ENCODE measurements at regions of chr17 and their contacts with region 1.

Region 1: DNA sequence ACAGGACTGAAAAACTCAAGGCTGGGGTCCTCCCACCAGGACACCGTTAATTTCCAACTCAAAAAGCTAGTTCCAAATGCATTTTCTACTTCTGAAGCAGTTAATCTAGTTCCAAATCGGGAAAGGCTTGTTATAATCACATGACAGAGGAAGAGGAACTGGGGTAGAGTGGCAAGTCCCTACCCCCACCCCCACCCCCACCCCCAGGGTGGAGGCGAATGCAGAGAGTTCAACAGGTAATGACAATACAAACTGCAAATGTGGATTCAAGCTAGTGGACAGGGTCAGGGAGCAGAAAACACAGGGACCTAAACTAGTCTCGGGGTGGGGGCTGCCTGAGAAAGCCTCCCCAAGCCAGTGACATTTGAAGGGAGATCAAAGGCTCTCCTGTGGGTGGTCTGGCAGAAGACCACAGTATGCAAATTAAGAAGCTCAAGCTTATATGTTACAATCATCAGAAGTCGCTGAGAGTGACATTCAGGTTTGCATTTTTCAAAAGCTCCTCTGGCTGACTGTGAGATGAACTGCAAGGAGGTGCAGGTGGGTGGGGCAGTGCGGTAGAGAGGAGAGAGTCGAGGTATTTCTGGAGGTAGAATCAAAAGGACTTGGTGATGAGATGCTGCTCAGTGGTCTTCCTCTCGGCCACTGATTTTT is 56.4 kb upstream of the SLC25A19 start:
- DNase-seq: peak in 12 of 14 experiments; percentile 12 to 71 (median 44)
- ATAC-seq: peak; percentile 79
- H3K4me3 ChIP-seq: peak overlapping the region; percentile 15
- H3K4me3 Mint-ChIP-seq: peak overlapping the region; percentile 76
- H3K27ac ChIP-seq: peak overlapping the region in 1 of 2 donors; percentile 12
- H3K27ac Mint-ChIP-seq: peak overlapping the region; percentile 85
- H3K4me1 ChIP-seq: peaks cover 93% of the 10 kb centered on the region
- H3K4me1 Mint-ChIP-seq: peaks cover 95% of the 10 kb centered on the region
- H3K27me3 ChIP-seq: no peaks in the 10 kb centered on the region
- H3K27me3 Mint-ChIP-seq: no peaks in the 10 kb centered on the region
- CTCF ChIP-seq: no peak

Region 2: DNA sequence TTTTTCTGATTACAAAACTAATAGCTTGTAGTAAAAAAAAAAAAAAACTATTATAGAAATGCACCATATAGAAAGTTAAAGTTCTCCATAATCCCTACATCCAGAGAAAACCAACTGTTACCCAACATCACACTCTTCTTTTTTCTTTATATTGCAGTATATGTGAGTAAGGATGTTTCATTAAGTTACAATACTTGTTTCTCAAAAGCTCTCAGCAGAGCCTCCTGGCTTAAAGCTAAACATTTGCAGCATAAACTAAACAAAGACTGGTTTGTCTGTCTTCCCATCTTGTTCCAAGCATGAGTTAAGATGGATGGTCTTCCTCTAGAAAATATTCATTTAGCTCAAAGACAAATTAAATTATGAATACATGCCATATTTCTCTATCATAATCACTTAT is 34.7 kb after region 1 on chr17:
- CTCF ChIA-PET with region 1: interaction called, 4 read pairs
- POLR2A ChIA-PET with region 1: interaction called, 5 read pairs
- intact Hi-C with region 1: loop called in 1 of 2 experiments (anchors 5 kb)
- DNase-seq: no peak
- ATAC-seq: no peak
- H3K4me3 ChIP-seq: no peak overlapping the region
- H3K4me3 Mint-ChIP-seq: peak overlapping the region; percentile 1
- H3K27ac ChIP-seq: no peak overlapping the region
- H3K27ac Mint-ChIP-seq: peak overlapping the region; percentile 10
- H3K4me1 ChIP-seq: peaks cover 27% of the 10 kb centered on the region
- H3K4me1 Mint-ChIP-seq: peaks cover 69% of the 10 kb centered on the region
- H3K27me3 ChIP-seq: no peaks in the 10 kb centered on the region
- H3K27me3 Mint-ChIP-seq: no peaks in the 10 kb centered on the region
- CTCF ChIP-seq: no peak

Region 3: GRCh38 chr17:75539967-75540711 is 194.5 kb after region 1 on chr17:
- CTCF ChIA-PET with region 1: no interaction called
- POLR2A ChIA-PET with region 1: no interaction called
- intact Hi-C with region 1: no loop called
- DNase-seq: no peak
- ATAC-seq: no peak
- H3K4me3 ChIP-seq: no peak overlapping the region
- H3K4me3 Mint-ChIP-seq: no peak overlapping the region
- H3K27ac ChIP-seq: no peak overlapping the region
- H3K27ac Mint-ChIP-seq: no peak overlapping the region
- H3K4me1 ChIP-seq: peaks cover 12% of the 10 kb centered on the region
- H3K4me1 Mint-ChIP-seq: peaks cover 7% of the 10 kb centered on the region
- H3K27me3 ChIP-seq: no peaks in the 10 kb centered on the region
- H3K27me3 Mint-ChIP-seq: no peaks in the 10 kb centered on the region
- CTCF ChIP-seq: no peak

Measured in CD4-positive, alpha-beta T cell (primary cell).